ENCODE measurements at regions of chr20 and their contacts with region 1.

Region 1: DNA sequence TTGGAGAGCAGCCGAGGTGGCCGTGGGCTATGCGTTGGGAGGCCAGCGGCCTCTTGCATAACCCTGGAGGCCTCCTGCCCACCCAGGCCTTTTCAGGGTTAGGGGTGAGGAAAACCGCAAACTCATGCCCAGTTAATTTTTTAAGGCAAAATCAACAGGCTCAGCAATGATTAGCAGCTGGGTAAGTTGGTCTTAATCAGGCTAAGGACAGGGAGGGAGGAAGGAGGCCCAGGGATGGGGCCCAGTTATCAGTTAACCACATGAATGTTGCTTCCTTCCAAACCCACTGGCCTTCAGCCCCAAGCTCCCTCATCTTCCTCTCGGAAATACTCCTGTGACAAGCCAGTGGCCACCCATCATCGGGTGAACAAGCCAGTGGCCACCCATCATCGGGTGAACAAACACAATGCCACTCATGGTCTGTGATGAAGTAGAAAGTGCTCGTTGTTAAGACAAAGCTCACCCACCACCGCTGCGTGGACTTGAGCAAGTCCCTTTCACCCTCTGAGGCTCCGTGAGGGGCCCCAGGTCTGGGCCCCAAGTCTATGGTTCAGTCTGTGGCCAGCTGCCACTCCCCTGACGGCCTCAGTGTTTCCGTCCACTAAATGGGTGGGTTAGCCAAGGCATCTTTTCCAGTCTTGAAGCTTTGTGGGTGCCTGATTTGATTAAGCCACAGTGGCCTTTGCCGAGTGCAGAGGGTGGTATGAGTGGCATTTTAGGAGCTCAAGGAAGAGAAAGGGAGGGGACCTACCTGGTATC is 39.4 kb downstream of the HNF4A start:
- DNase-seq: no peak
- H3K4me3 ChIP-seq: no peak overlapping the region
- H3K27me3 ChIP-seq: peaks cover 10% of the 10 kb centered on the region
- CTCF ChIP-seq: no peak

Region 2: GRCh38 chr20:44407402-44408184 is 12.7 kb after region 1 on chr20:
- CTCF ChIA-PET with region 1: interaction called, 19 read pairs
- POLR2A ChIA-PET with region 1: no interaction called
- DNase-seq: peak; percentile 17
- H3K4me3 ChIP-seq: no peak overlapping the region
- H3K27me3 ChIP-seq: peaks cover 2% of the 10 kb centered on the region
- CTCF ChIP-seq: no peak

Measured in BJ (cell line).